ENCODE measurements at regions of chrX and their contacts with region 1.

Region 1: GRCh38 chrX:3119376-3119775 is 78.1 kb downstream of the ARSF start:
- DNase-seq: no peak
- ATAC-seq: no peak
- H3K4me3 ChIP-seq: no peak overlapping the region
- H3K27ac ChIP-seq: no peak overlapping the region
- H3K4me1 ChIP-seq: no peaks in the 10 kb centered on the region
- H3K27me3 ChIP-seq: no peaks in the 10 kb centered on the region
- CTCF ChIP-seq: no peak

Region 2: DNA sequence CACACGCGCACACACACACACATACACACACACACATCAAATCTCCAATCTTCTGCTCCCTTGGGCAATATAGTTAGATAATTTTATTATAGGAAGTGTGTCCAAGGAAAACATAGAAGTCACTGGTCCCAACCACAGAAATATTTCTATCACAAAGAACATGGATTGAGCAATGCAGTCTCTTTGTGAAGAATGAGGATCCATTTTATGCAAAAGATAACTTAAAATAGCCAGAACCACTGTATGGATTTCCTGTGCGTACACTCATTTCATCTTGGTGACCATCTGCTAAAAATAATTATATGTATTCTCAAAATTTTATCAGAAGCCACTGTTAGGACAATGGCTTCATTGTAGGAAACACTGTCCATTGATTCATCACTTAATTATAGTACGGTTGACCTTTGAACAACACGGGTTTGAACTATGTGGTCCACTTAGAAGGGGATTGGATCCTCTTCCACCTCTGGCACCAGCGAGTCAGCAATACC is 396.7 kb after region 1 on chrX:
- intact Hi-C with region 1: no loop called
- DNase-seq: no peak
- ATAC-seq: no peak
- H3K4me3 ChIP-seq: no peak overlapping the region
- H3K27ac ChIP-seq: no peak overlapping the region
- H3K4me1 ChIP-seq: no peaks in the 10 kb centered on the region
- H3K27me3 ChIP-seq: no peaks in the 10 kb centered on the region
- CTCF ChIP-seq: no peak

Region 3: GRCh38 chrX:3638280-3638873 is 519.0 kb after region 1 on chrX:
- intact Hi-C with region 1: loop called (anchors 10 kb)
- DNase-seq: no peak
- ATAC-seq: peak; percentile 45
- H3K4me3 ChIP-seq: no peak overlapping the region
- H3K27ac ChIP-seq: no peak overlapping the region
- H3K4me1 ChIP-seq: no peaks in the 10 kb centered on the region
- H3K27me3 ChIP-seq: no peaks in the 10 kb centered on the region
- CTCF ChIP-seq: peak; percentile 53